ENCODE measurements at regions of chr17 and their contacts with region 1.

Region 1: GRCh38 chr17:34613064-34614019 is 34.0 kb downstream of the TMEM132E start:
- H3K4me3 ChIP-seq: no peak overlapping the region
- H3K27ac ChIP-seq: peak overlapping the region; percentile 73
- H3K4me1 ChIP-seq: peaks cover 52% of the 10 kb centered on the region
- CTCF ChIP-seq: no peak

Region 2: DNA sequence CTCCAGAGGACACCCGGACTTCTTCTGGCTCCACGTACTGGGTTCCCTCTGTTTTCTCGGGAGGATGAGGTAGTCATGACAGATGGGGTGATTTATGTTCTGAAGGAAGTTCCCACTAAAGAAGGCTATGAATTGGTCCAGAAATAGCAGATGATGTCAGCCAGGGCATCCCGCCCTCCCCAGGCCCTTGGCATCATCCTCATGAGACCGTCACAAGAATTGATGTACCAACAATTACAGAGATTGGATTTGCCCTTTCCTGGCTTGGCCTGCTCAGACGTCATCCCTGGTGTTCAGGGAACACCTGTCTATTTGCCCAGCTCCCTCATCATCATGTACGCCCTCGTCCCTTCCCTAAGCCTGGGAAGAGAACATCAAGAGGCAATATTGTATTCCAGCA is 147.6 kb before region 1 on chr17:
- CTCF ChIA-PET with region 1: no interaction called
- POLR2A ChIA-PET with region 1: no interaction called
- H3K4me3 ChIP-seq: no peak overlapping the region
- H3K27ac ChIP-seq: no peak overlapping the region
- H3K4me1 ChIP-seq: no peaks in the 10 kb centered on the region
- CTCF ChIP-seq: no peak

Region 3: GRCh38 chr17:34519282-34519681 is 94.1 kb before region 1 on chr17:
- CTCF ChIA-PET with region 1: no interaction called
- POLR2A ChIA-PET with region 1: no interaction called
- H3K4me3 ChIP-seq: no peak overlapping the region
- H3K27ac ChIP-seq: no peak overlapping the region
- H3K4me1 ChIP-seq: no peaks in the 10 kb centered on the region
- CTCF ChIP-seq: no peak; the same call in 1 of the 2 replicates

Region 4: GRCh38 chr17:34579017-34579946 is 34.1 kb before region 1 on chr17 and contains the start of gene TMEM132E:
- CTCF ChIA-PET with region 1: interaction called, 7 read pairs
- POLR2A ChIA-PET with region 1: interaction called, 11 read pairs
- H3K4me3 ChIP-seq: peak within 1 kb of the TSS; percentile 57
- H3K27ac ChIP-seq: peak within 1 kb of the TSS; percentile 80; the same call in 1 of the 2 replicates
- H3K4me1 ChIP-seq: peaks cover 18% of the 10 kb centered on the region
- CTCF ChIP-seq: peak; percentile 76